ENCODE measurements at regions of chr19 and their contacts with region 1.

Region 1: GRCh38 chr19:46954993-46955812 is 64.4 kb upstream of the NPAS1 start:
- DNase-seq: peak in 7 of 9 donors; percentile 43 to 69 (median 57)
- ATAC-seq: peak; percentile 89
- H3K4me3 ChIP-seq: peak overlapping the region; percentile 64
- H3K4me3 Mint-ChIP-seq: peak overlapping the region; percentile 70 to 88 (median 82)
- H3K27ac ChIP-seq: peak overlapping the region; percentile 54
- H3K27ac Mint-ChIP-seq: peak overlapping the region; percentile 71 to 92 (median 85)
- H3K4me1 ChIP-seq: peaks cover 27 to 88% of the 10 kb centered on the region in 2 donors
- H3K4me1 Mint-ChIP-seq: peaks cover 37 to 69% (median 42%) of the 10 kb centered on the region in 7 donors
- H3K27me3 ChIP-seq: no peaks in the 10 kb centered on the region
- H3K27me3 Mint-ChIP-seq: no peaks in the 10 kb centered on the region

Region 2: DNA sequence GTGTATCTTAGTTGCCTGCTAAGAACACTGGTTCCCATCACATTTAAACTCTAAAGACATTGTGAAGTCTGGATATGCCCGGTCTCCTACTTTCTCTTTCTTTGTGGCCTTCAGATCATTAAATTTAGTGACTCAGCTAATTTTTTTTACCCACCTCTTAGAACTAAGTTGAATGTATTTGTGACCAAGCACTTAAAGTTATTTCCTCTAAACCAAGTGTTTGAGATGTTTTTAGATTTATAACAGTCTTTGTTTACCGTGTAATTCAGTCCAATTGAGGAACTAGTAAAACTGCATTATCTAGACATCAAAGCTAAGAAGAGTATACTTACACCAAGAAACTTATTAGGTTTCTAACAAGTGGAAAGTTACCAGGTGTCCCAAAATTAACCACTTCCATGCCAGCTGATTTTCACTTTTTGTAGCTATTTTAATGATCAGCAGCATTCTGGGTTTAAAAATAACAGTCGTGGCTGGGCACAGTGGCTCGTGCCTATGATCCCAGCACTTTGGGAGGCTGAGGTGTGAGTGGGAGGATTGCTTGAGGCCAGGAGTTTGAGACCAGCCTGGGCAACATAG is 41.3 kb before region 1 on chr19:
- CTCF ChIA-PET with region 1: no interaction called
- POLR2A ChIA-PET with region 1: no interaction called
- intact Hi-C with region 1: no loop called
- DNase-seq: peak in 1 of 9 donors; percentile 3
- ATAC-seq: peak; percentile 26
- H3K4me3 ChIP-seq: no peak overlapping the region
- H3K4me3 Mint-ChIP-seq: peak overlapping the region in 2 of 10 donors; percentile 20 to 29
- H3K27ac ChIP-seq: no peak overlapping the region
- H3K27ac Mint-ChIP-seq: peak overlapping the region in 1 of 9 donors; percentile 16
- H3K4me1 ChIP-seq: peaks cover 0 to 16% of the 10 kb centered on the region in 2 donors
- H3K4me1 Mint-ChIP-seq: peaks cover 21 to 55% (median 46%) of the 10 kb centered on the region in 7 donors
- H3K27me3 ChIP-seq: no peaks in the 10 kb centered on the region
- H3K27me3 Mint-ChIP-seq: no peaks in the 10 kb centered on the region

Region 3: GRCh38 chr19:46932346-46932745 is 22.9 kb before region 1 on chr19:
- CTCF ChIA-PET with region 1: no interaction called
- POLR2A ChIA-PET with region 1: no interaction called
- intact Hi-C with region 1: loop called in 1 of 2 experiments (anchors 1 kb)
- DNase-seq: no peak
- ATAC-seq: no peak
- H3K4me3 ChIP-seq: no peak overlapping the region
- H3K4me3 Mint-ChIP-seq: no peak overlapping the region
- H3K27ac ChIP-seq: no peak overlapping the region
- H3K27ac Mint-ChIP-seq: peak overlapping the region in 5 of 9 donors; percentile 2 to 67 (median 54)
- H3K4me1 ChIP-seq: peaks cover 19 to 63% of the 10 kb centered on the region in 2 donors
- H3K4me1 Mint-ChIP-seq: peaks cover 33 to 70% (median 51%) of the 10 kb centered on the region in 7 donors
- H3K27me3 ChIP-seq: no peaks in the 10 kb centered on the region
- H3K27me3 Mint-ChIP-seq: no peaks in the 10 kb centered on the region

Measured in naive thymus-derived CD4-positive, alpha-beta T cell (primary cell).